Activated CD4-positive, alpha-beta T cell treated with anti-CD3 and anti-CD28 coated beads for 36 hours (primary cell): ENCODE measurements at regions of chr20 and their contacts with region 1.

Region 1: GRCh38 chr20:3407771-3408637 is 535 bp upstream of the DNAAF9 start:
- DNase-seq: peak; percentile 80
- ATAC-seq: peak; percentile 64
- H3K4me3 Mint-ChIP-seq: peak overlapping the region; percentile 83
- H3K27ac Mint-ChIP-seq: peak overlapping the region; percentile 88
- H3K4me1 Mint-ChIP-seq: peaks cover 32% of the 10 kb centered on the region
- H3K27me3 Mint-ChIP-seq: peaks cover 3% of the 10 kb centered on the region

Region 2: GRCh38 chr20:2279253-2279779 is 1128.7 kb before region 1 on chr20:
- CTCF ChIA-PET with region 1: no interaction called
- POLR2A ChIA-PET with region 1: no interaction called
- intact Hi-C with region 1: no loop called
- DNase-seq: no peak
- ATAC-seq: no peak
- H3K4me3 Mint-ChIP-seq: no peak overlapping the region
- H3K27ac Mint-ChIP-seq: no peak overlapping the region
- H3K4me1 Mint-ChIP-seq: no peaks in the 10 kb centered on the region
- H3K27me3 Mint-ChIP-seq: peaks cover 11% of the 10 kb centered on the region

Region 3: GRCh38 chr20:2651772-2652723 is 756.0 kb before region 1 on chr20 and contains the start of gene NOP56:
- CTCF ChIA-PET with region 1: no interaction called
- POLR2A ChIA-PET with region 1: no interaction called
- intact Hi-C with region 1: loop called in 1 of 2 experiments (anchors 5 kb)
- DNase-seq: peak; percentile 95
- ATAC-seq: peak; percentile 84
- H3K4me3 Mint-ChIP-seq: peak within 1 kb of the TSS; percentile 87
- H3K27ac Mint-ChIP-seq: peak within 1 kb of the TSS; percentile 90
- H3K4me1 Mint-ChIP-seq: peaks cover 40% of the 10 kb centered on the region
- H3K27me3 Mint-ChIP-seq: no peaks in the 10 kb centered on the region
- total RNA-seq, gene NOP56: 504 to 532 TPM

Region 4: GRCh38 chr20:3156811-3157619 is 251.0 kb before region 1 on chr20:
- CTCF ChIA-PET with region 1: no interaction called
- POLR2A ChIA-PET with region 1: no interaction called
- intact Hi-C with region 1: loop called in 1 of 2 experiments (anchors 5 kb)
- DNase-seq: peak; percentile 41
- ATAC-seq: peak; percentile 89
- H3K4me3 Mint-ChIP-seq: peak overlapping the region; percentile 91
- H3K27ac Mint-ChIP-seq: peak overlapping the region; percentile 91
- H3K4me1 Mint-ChIP-seq: peaks cover 60% of the 10 kb centered on the region
- H3K27me3 Mint-ChIP-seq: no peaks in the 10 kb centered on the region

Region 5: GRCh38 chr20:3204124-3204822 is 203.7 kb before region 1 on chr20 and contains the start of gene DDRGK1:
- CTCF ChIA-PET with region 1: no interaction called
- POLR2A ChIA-PET with region 1: no interaction called
- intact Hi-C with region 1: loop called in 1 of 2 experiments (anchors 2 kb)
- DNase-seq: peak; percentile 94
- ATAC-seq: peak; percentile 91
- H3K4me3 Mint-ChIP-seq: peak within 1 kb of the TSS; percentile 92
- H3K27ac Mint-ChIP-seq: peak within 1 kb of the TSS; percentile 98
- H3K4me1 Mint-ChIP-seq: peaks cover 12% of the 10 kb centered on the region
- H3K27me3 Mint-ChIP-seq: no peaks in the 10 kb centered on the region
- total RNA-seq, gene DDRGK1: 49.3 to 52.2 TPM

Region 6: GRCh38 chr20:3420211-3420707 is 12.3 kb after region 1 on chr20:
- CTCF ChIA-PET with region 1: interaction called, 8 read pairs
- POLR2A ChIA-PET with region 1: no interaction called
- intact Hi-C with region 1: loop called in 1 of 2 experiments (anchors 1 kb)
- DNase-seq: peak; percentile 78
- ATAC-seq: peak; percentile 100
- H3K4me3 Mint-ChIP-seq: no peak overlapping the region
- H3K27ac Mint-ChIP-seq: peak overlapping the region; percentile 32
- H3K4me1 Mint-ChIP-seq: peaks cover 8% of the 10 kb centered on the region
- H3K27me3 Mint-ChIP-seq: no peaks in the 10 kb centered on the region